HEK293T (cell line): ENCODE measurements at regions of chr1 and their contacts with region 1.

Region 1: DNA sequence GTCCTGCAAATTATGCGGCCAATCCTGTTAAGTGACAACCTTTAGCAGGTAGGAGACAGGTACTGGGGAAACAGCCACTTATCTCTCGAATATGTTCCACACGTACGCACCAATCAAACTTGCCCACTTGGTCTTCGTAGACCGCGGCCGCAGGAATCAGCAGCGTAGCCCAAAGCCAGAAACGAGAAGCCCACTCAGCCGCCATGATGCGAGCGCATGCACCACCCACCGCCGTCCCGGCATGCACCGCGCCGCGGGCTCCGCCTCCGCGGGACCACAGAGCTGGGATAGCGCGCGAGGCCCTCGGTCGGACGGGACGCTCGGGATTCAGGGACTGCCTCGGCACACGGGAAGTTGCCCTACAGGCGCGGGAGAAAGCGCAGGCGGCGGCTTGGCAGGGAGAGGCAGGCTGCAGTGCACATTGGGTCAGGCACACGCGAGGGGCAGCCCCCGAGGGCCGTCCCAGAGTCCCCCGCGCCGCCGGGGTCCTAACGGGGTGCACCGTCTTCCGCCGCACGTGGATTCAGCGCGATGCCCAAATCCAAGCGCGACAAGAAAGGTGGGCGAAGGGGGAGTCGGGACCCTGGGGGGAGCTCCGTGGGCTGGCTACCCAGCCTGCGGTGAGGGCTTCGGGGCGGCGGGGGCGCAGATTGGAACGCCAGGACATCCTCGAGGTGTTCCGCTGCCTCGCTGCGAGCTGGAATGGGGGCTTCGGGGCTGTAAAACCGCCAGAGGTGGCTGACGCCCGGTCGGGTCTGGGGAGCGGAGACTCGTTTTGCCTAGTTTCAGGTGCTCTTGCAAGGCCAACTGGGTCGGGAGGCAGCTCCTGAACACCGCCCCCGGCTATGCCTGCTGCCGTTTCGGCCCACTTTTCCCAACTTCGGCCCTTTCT is at the starts of genes EMC1 and MRTO4:
- DNase-seq: peak; percentile 93

Region 2: GRCh38 chr1:19128968-19129514 is 122.5 kb before region 1 on chr1:
- CTCF ChIA-PET with region 1: no interaction called
- POLR2A ChIA-PET with region 1: no interaction called
- DNase-seq: no peak

Region 3: GRCh38 chr1:19240673-19241538 is 10.6 kb before region 1 on chr1:
- CTCF ChIA-PET with region 1: no interaction called
- POLR2A ChIA-PET with region 1: interaction called, 11 read pairs
- DNase-seq: peak; percentile 79

Region 4: GRCh38 chr1:19273106-19273843 is 21.7 kb after region 1 on chr1:
- CTCF ChIA-PET with region 1: no interaction called
- POLR2A ChIA-PET with region 1: no interaction called
- DNase-seq: no peak